ENCODE measurements at regions of chr12 and their contacts with region 1.

Region 1: DNA sequence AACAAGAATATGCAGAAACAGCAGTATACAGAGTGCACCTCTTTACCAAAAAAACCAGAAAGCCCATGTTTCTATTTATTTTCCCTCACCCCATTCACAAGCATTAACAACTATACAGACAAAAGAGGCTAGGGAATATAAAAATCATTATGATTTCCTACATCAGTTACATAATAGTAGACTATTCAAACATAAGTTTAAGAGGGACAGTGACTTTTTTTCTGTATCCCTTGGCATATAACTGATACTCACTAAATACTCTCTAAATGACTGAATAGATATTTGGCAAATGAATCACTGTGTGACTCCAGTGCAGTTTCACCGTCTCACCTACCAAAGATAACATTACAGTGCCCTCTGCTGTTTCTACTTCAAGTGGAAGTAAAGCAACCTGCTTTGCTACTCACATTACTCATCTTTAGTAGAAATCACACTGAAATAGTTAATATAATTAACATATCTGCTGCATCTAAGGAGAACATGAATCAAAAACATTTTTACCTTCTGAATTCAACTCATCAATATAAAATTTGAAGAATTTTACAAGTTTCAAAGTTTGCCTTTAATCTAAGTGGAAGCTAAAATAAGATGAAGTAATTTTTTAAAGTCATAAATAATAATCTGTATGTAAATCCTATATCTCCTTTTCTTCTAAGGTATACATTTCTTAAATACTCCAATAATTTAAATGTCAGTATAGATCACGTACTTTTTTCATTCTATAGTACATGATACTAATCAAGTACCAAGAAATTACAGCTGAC is 103.8 kb downstream of the OSBPL8 start:
- DNase-seq: peak in 1 of 2 experiments; percentile 67
- H3K4me3 ChIP-seq: no peak overlapping the region
- H3K4me3 Mint-ChIP-seq: no peak overlapping the region
- H3K27ac Mint-ChIP-seq: peak overlapping the region; percentile 67
- H3K4me1 ChIP-seq: peaks cover 13% of the 10 kb centered on the region
- H3K4me1 Mint-ChIP-seq: peaks cover 13% of the 10 kb centered on the region
- H3K27me3 ChIP-seq: no peaks in the 10 kb centered on the region
- H3K27me3 Mint-ChIP-seq: no peaks in the 10 kb centered on the region
- CTCF ChIP-seq: peak; percentile 48 to 72

Region 2: GRCh38 chr12:75526655-75527511 is 928.9 kb before region 1 on chr12:
- CTCF ChIA-PET with region 1: interaction called, 3 read pairs
- POLR2A ChIA-PET with region 1: no interaction called
- intact Hi-C with region 1: loop called (anchors 1 kb)
- DNase-seq: peak; percentile 28 to 37
- H3K4me3 ChIP-seq: no peak overlapping the region
- H3K4me3 Mint-ChIP-seq: no peak overlapping the region
- H3K27ac Mint-ChIP-seq: no peak overlapping the region
- H3K4me1 ChIP-seq: no peaks in the 10 kb centered on the region
- H3K4me1 Mint-ChIP-seq: peaks cover 17% of the 10 kb centered on the region
- H3K27me3 ChIP-seq: no peaks in the 10 kb centered on the region
- H3K27me3 Mint-ChIP-seq: peaks cover 2% of the 10 kb centered on the region
- CTCF ChIP-seq: peak; percentile 75 to 77

Region 3: GRCh38 chr12:75623631-75624118 is 832.1 kb before region 1 on chr12:
- CTCF ChIA-PET with region 1: no interaction called
- POLR2A ChIA-PET with region 1: no interaction called
- intact Hi-C with region 1: loop called (anchors 2 kb)
- DNase-seq: peak; percentile 46 to 50
- H3K4me3 ChIP-seq: no peak overlapping the region
- H3K4me3 Mint-ChIP-seq: no peak overlapping the region
- H3K27ac Mint-ChIP-seq: peak overlapping the region; percentile 76
- H3K4me1 ChIP-seq: peaks cover 17% of the 10 kb centered on the region
- H3K4me1 Mint-ChIP-seq: peaks cover 20% of the 10 kb centered on the region
- H3K27me3 ChIP-seq: no peaks in the 10 kb centered on the region
- H3K27me3 Mint-ChIP-seq: no peaks in the 10 kb centered on the region
- CTCF ChIP-seq: peak; percentile 20 to 51

Region 4: GRCh38 chr12:76083904-76084862 is 371.6 kb before region 1 on chr12 and contains the start of gene NAP1L1:
- CTCF ChIA-PET with region 1: interaction called, 6 read pairs
- POLR2A ChIA-PET with region 1: no interaction called
- intact Hi-C with region 1: loop called (anchors 1 kb)
- DNase-seq: peak; percentile 96 to 98
- H3K4me3 ChIP-seq: peak within 1 kb of the TSS; percentile 78
- H3K4me3 Mint-ChIP-seq: peak within 1 kb of the TSS; percentile 96
- H3K27ac Mint-ChIP-seq: peak within 1 kb of the TSS; percentile 99
- H3K4me1 ChIP-seq: peaks cover 15% of the 10 kb centered on the region
- H3K4me1 Mint-ChIP-seq: peaks cover 26% of the 10 kb centered on the region
- H3K27me3 ChIP-seq: no peaks in the 10 kb centered on the region
- H3K27me3 Mint-ChIP-seq: no peaks in the 10 kb centered on the region
- CTCF ChIP-seq: peak in 1 of 2 experiments; percentile 5
- total RNA-seq, gene NAP1L1: 696 and 711 TPM in 2 replicates

Region 5: DNA sequence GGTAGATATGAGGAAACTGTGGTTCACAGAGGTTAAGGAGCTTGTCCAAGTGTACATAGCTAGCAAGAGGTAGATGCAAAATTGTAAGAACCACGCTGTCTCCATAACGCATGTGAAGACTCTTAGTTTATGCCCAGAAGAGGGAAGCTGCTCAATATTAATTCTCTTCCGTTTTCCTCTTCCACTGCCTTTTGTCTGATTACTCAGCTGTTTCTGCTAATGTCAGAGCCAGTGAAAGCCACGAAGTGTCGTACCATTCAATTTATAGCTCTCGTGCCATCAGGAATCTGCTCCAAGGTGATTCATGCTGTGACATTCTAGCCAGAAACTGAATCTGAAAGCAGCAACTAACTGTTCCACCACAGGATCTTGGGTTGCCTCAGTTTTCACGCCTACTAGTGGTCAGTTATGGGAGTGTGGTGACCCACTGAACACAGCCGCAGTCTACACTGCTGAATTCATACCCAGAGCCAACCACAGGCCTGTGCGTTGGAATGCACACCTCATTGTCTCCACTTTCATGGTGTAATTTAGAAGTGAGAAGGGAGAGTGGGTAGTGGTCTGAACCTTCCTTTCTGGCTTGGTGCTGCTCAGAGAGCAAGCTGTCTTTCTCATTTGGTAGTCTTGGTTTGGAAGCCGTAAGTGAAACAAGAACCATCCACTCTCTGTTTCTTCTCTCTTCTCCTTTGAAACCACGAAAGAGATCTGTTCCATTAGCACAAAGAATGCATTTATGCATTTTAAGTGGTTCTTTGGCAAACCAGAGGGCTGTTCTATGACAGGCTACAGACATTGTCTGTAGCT is 297.0 kb before region 1 on chr12:
- CTCF ChIA-PET with region 1: no interaction called
- POLR2A ChIA-PET with region 1: no interaction called
- intact Hi-C with region 1: loop called (anchors 2 kb)
- DNase-seq: peak; percentile 44 to 61
- H3K4me3 ChIP-seq: no peak overlapping the region
- H3K4me3 Mint-ChIP-seq: no peak overlapping the region
- H3K27ac Mint-ChIP-seq: no peak overlapping the region
- H3K4me1 ChIP-seq: no peaks in the 10 kb centered on the region
- H3K4me1 Mint-ChIP-seq: peaks cover 8% of the 10 kb centered on the region
- H3K27me3 ChIP-seq: no peaks in the 10 kb centered on the region
- H3K27me3 Mint-ChIP-seq: no peaks in the 10 kb centered on the region
- CTCF ChIP-seq: peak; percentile 66 to 67

Region 6: DNA sequence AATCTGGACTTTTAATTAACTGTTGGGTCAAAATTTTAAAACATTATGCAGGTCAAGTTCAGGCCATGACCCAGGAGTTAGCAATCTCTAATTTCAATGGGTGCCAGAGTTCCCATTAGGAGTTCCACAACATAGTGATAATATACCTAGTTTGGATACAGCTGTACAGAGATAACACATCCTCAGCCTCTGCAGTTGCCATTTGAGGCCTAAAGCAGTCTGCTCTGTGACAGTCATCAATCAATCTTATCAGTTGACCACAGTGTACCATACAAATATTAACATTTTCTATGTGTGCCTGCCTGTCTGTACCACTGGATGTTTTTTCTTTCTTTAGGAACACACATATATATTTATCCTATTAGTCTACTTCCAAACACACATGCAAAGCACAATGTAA is 53.5 kb before region 1 on chr12:
- CTCF ChIA-PET with region 1: interaction called, 4 read pairs
- POLR2A ChIA-PET with region 1: no interaction called
- intact Hi-C with region 1: loop called (anchors 1 kb)
- DNase-seq: peak; percentile 44 to 51
- H3K4me3 ChIP-seq: no peak overlapping the region
- H3K4me3 Mint-ChIP-seq: no peak overlapping the region
- H3K27ac Mint-ChIP-seq: no peak overlapping the region
- H3K4me1 ChIP-seq: peaks cover 17% of the 10 kb centered on the region; the same call in 1 of the 2 replicates
- H3K4me1 Mint-ChIP-seq: no peaks in the 10 kb centered on the region
- H3K27me3 ChIP-seq: no peaks in the 10 kb centered on the region
- H3K27me3 Mint-ChIP-seq: no peaks in the 10 kb centered on the region
- CTCF ChIP-seq: no peak